Right ventricle myocardium inferior (tissue), 1 donor: ENCODE measurements at regions of chr21 and their contacts with region 1.

Region 1: GRCh38 chr21:44932408-44933181 is 7.2 kb upstream of the SLX9 start:
- DNase-seq: peak; percentile 85
- ATAC-seq: peak; percentile 46

Region 2: DNA sequence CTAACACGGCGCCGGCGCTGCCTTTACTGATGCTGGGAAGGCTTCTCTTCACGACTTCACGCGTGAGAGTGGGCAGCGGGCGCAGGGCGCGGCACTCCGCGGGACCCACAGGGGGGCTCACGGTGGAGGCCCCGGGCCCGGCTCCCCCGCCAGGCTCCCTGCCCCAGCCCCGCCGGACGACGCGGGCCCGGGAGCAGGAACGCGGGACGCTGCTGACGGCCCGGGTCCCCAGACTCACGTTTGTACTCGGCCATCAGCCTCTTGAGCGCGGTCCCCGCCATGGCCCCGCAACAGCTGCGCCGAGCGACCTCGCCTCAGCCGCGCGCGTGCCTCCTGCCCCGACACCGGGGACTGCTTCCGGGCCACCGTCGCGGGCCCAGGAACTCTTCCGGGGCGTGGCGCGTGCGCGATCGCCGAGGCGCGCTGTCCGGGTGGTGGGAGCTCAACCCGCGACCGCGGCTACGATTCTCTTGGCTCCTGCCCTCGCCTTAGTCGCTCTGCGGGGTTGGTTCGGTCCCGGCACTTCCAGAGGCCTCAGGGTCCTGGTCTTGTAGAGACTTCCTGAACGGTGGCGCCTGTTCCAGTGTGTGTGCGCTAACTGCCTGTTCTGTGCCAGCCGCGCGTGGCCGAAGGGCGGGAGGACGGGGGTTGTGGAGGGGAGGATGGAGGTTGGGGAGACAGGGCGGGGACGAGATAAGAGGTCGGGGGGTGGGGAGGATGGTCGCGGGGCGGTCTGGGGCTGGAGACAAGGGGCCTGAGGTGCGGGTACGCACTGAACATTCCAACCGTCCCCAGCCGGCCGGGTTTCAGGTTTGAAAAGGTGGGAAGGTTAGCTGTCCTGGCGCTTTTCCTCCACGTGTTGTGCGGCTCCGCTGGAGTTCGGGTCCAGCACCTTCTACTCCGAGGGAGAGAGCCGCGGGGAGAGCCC is 130.9 kb before region 1 on chr21 and contains the start of gene UBE2G2:
- intact Hi-C with region 1: loop called (anchors 5 kb)
- DNase-seq: peak; percentile 94
- ATAC-seq: peak; percentile 94
- total RNA-seq, gene UBE2G2: 66.6 TPM

Region 3: DNA sequence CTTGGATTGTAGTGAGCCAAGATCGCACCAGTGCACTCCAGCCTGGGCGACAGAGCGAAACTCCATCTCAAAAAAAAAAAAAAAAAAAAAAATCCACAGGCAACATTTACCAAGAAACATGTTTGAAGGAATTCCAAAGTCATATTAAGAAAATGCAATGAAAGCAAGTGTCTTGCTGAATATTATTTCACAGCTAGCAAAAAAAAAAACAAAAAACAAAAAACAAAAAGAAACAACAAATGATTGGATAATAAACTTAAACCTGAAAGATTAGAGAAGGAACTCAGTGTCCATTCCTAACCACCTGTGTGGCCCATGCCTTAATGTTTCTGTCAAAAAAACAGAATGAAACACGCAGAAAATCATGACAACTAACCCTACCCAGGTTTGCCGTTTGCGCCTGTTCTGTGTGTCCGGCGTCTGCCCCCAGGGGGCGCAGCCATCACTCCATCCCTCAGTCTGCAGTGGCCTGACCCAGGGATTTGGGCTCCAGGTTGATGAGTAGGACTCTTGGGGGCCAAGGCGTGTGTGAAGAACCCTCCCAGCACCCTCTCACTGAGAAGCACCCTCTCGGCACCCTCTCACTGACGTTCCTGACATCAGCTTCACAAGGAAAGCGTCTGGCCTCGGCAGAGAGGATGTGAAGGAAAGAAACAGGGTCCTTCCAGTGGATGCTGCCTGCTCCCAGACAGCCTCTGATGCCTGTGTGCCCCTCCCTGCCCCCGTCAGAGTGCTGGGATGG is 39.9 kb before region 1 on chr21:
- intact Hi-C with region 1: loop called (anchors 1 kb)
- DNase-seq: peak; percentile 90
- ATAC-seq: peak; percentile 69

Region 4: DNA sequence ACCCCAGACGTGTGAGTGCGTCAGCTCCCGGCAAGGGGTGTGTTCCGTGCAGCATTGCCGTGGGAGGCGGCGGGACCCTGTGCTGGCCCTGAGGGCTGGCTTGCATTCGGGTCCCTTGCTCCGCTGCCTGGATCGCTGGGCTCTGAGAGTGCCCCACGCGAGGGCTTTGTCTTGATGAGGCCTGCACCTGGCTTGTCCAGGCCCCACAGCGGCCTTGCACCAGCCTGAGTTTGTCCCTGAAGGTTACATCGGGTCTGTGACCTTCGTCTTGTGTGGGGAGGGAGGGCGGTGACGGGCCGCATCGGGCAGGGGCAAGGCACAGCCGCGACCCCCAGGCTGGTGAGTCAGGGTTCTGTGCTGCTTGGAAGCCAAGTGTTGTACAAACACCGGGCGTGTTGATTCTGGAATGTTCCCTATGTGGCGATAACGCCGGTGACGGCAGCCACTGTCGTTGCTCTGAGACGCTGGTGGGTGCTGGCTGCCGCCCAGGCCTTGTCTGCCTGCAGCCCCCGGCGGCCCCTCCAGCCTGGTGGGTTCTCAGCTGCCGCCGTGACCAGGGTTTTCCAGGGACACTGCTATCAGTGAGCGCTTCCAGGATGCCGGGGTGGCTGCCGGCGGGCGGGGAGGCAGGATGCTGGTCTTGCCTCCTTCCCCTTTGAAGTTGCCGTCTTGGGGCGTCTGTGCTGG is 50.1 kb after region 1 on chr21:
- intact Hi-C with region 1: no loop called
- DNase-seq: peak; percentile 68
- ATAC-seq: peak; percentile 20

Region 5: GRCh38 chr21:45041351-45041805 is 108.8 kb after region 1 on chr21:
- intact Hi-C with region 1: no loop called
- DNase-seq: peak; percentile 88
- ATAC-seq: peak; percentile 95